Sigmoid colon (tissue), 7 donors: ENCODE measurements at regions of chr4 and their contacts with region 1.

Region 1: DNA sequence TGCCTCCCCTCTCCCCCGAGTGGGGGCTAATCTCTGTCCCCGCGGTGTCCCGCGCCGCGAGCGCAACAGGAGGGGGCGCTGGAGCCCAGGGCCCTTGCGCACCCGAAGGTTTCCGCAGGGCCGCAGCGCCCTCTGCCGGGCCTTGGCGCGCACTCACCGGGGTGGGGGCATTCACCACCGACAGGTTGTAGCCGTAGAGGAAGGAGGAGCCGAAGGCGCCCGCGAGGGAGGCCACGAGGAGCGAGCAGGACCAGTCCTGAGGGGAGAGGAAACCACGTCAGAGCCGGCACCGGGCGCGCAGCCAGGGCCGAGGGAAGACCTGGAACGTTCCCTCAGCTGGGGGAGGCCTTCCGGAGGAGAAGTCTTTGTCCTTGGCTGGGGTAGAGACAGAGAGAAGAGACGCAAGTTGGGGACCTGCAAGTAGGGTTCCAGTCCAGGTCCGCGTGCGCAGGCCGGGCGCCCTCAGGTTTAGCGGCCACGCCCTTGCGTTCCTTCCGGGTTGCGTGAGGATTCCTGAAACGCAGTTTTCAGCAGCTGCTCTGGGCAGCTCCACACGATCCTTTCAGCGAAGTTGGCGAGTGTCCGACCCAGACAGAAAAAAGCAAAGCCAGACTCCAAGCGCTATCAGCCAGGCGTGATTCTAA is 2.4 kb downstream of the SLC2A9 start:
- DNase-seq: peak; percentile 99
- H3K4me3 ChIP-seq: peak overlapping the region; percentile 33 to 50 (median 48)
- H3K27ac ChIP-seq: peak overlapping the region; percentile 84 to 91 (median 88)
- H3K4me1 ChIP-seq: peaks cover 0 to 23% (median 18%) of the 10 kb centered on the region in 4 donors
- H3K27me3 ChIP-seq: no peaks in the 10 kb centered on the region
- CTCF ChIP-seq: peak; percentile 98 to 99 (median 99)
- EP300 ChIP-seq: peak in 2 of 4 donors; percentile 52 to 83
- POLR2A ChIP-seq: peak in 1 of 2 donors; percentile 30

Region 2: GRCh38 chr4:9691238-9692065 is 327.5 kb before region 1 on chr4:
- intact Hi-C with region 1: loop called (anchors 5 kb)
- DNase-seq: peak; percentile 98
- H3K4me3 ChIP-seq: peak overlapping the region; percentile 41 to 59 (median 57)
- H3K27ac ChIP-seq: peak overlapping the region; percentile 78 to 84 (median 82)
- H3K4me1 ChIP-seq: no peaks in the 10 kb centered on the region
- H3K27me3 ChIP-seq: no peaks in the 10 kb centered on the region
- CTCF ChIP-seq: no peak
- EP300 ChIP-seq: no peak
- POLR2A ChIP-seq: no peak

Region 3: DNA sequence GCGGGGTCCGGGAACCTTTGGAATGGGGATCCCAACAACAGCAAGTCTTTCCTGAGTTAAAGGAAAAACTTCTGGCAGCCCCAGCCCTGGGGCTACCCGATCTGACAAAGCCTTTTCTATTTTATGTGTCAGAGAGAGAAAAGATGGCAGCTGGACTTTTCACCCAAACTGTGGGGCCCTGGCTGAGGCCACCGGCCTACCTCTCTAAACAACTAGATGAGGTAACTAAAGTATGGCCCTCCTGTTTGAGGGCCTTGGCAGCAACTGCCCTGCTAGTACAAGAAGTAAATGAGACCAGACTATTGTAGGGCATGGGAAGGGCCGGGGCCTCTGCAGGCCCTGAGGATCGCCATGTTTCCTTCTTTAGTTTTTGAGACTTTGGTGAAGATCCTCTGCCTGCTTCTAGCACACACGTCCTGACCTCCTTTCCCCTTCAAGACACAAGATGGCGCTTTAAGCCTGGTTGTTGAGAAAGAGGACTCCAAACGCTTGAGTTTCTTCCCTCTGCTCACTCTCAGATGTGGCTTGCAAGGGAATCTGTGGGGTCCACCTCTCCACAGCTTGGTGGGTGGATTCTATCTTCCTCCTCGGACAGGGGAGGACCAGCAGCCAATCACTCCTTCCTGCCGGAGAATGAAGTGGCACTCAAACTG is 256.0 kb before region 1 on chr4:
- intact Hi-C with region 1: loop called (anchors 1 kb)
- DNase-seq: no peak
- H3K4me3 ChIP-seq: no peak overlapping the region
- H3K27ac ChIP-seq: no peak overlapping the region
- H3K4me1 ChIP-seq: no peaks in the 10 kb centered on the region
- H3K27me3 ChIP-seq: peaks cover 0 to 18% (median 0%) of the 10 kb centered on the region in 3 donors
- CTCF ChIP-seq: peak; percentile 36 to 63 (median 48)
- EP300 ChIP-seq: no peak
- POLR2A ChIP-seq: no peak

Region 4: GRCh38 chr4:10063544-10064300 is 44.8 kb after region 1 on chr4:
- intact Hi-C with region 1: loop called (anchors 1 kb)
- DNase-seq: peak; percentile 89
- H3K4me3 ChIP-seq: no peak overlapping the region
- H3K27ac ChIP-seq: peak overlapping the region; percentile 16 to 62 (median 54)
- H3K4me1 ChIP-seq: peaks cover 0 to 14% (median 12%) of the 10 kb centered on the region in 4 donors
- H3K27me3 ChIP-seq: no peaks in the 10 kb centered on the region
- CTCF ChIP-seq: peak; percentile 29 to 62 (median 47)
- EP300 ChIP-seq: no peak
- POLR2A ChIP-seq: no peak

Region 5: DNA sequence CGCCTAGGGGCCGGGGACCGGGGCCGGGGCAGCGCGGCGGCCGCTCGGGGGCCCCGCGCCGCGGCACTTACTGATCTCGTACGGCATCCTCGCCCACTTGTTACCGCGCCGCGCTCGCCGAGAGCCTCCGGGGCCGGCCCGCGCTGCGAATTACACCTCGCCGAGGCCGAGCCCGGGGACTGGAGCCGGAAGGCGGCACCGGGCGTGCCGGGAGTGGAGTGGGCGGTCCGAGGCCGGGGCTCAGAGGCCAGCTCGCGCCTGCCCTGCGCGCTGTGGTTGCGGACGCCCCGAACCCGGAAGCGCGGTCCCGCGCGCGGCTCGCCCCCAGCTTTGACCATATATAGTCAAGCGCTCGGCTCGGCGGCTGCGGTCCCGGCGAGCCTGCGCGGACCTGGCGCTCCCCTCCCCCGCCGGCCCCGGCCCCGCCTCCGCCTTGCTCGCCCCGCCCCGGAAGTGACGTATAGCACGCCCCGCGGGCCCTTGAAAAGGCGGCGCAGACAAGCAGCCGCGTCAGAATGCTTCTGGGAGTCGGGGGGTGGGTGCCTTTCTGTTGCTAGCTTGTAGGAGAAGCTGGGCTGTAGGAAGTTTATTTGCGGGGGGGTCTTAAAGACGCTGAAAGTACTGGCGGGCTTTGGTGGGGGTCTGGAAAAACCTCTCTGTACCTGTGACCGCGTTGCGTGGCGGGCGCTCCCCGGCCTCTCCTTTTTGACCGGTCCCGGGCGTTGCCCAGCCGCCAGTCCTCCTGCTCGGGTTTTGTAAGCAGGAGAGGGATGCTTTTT is 97.8 kb after region 1 on chr4 and contains the start of gene WDR1:
- intact Hi-C with region 1: loop called (anchors 1 kb)
- DNase-seq: peak; percentile 99
- H3K4me3 ChIP-seq: peak within 1 kb of the TSS; percentile 71 to 94 (median 86)
- H3K27ac ChIP-seq: peak within 1 kb of the TSS; percentile 90 to 98 (median 96)
- H3K4me1 ChIP-seq: peaks cover 0 to 65% (median 59%) of the 10 kb centered on the region in 4 donors
- H3K27me3 ChIP-seq: no peaks in the 10 kb centered on the region
- CTCF ChIP-seq: no peak
- EP300 ChIP-seq: peak in 1 of 4 donors; percentile 8
- POLR2A ChIP-seq: peak; percentile 98 to 99
- total RNA-seq, gene WDR1: 171 to 267 (median 238) TPM

Region 6: GRCh38 chr4:10346023-10346422 is 327.1 kb after region 1 on chr4:
- intact Hi-C with region 1: no loop called
- DNase-seq: no peak
- H3K4me3 ChIP-seq: no peak overlapping the region
- H3K27ac ChIP-seq: no peak overlapping the region
- H3K4me1 ChIP-seq: no peaks in the 10 kb centered on the region
- H3K27me3 ChIP-seq: no peaks in the 10 kb centered on the region
- CTCF ChIP-seq: no peak
- EP300 ChIP-seq: no peak
- POLR2A ChIP-seq: no peak

Region 7: GRCh38 chr4:10403633-10404445 is 384.9 kb after region 1 on chr4:
- intact Hi-C with region 1: loop called (anchors 5 kb)
- DNase-seq: no peak
- H3K4me3 ChIP-seq: no peak overlapping the region
- H3K27ac ChIP-seq: no peak overlapping the region
- H3K4me1 ChIP-seq: no peaks in the 10 kb centered on the region
- H3K27me3 ChIP-seq: no peaks in the 10 kb centered on the region
- CTCF ChIP-seq: peak; percentile 34 to 68 (median 57)
- EP300 ChIP-seq: no peak
- POLR2A ChIP-seq: no peak

Region 8: DNA sequence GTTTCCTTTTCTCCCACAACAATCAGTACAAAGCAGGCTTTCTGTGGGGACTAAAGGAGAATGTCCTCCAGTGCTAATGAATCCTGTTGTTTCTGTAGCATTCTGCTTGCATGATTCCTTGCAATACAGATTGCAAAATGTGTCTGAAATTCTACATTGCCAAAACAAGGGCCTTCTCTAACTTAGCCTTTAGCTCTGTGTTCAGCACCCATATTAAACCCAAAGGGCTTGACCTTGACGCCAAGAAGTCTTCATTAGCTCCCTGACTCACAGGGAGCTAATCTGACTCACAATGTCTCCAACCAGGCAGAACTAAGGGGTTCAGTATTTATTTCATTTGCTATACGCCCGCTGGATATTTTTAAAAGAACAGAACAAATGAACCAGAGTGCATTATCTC is 907.1 kb after region 1 on chr4:
- intact Hi-C with region 1: no loop called
- DNase-seq: no peak
- H3K4me3 ChIP-seq: no peak overlapping the region
- H3K27ac ChIP-seq: no peak overlapping the region
- H3K4me1 ChIP-seq: no peaks in the 10 kb centered on the region
- H3K27me3 ChIP-seq: no peaks in the 10 kb centered on the region
- CTCF ChIP-seq: no peak
- EP300 ChIP-seq: no peak
- POLR2A ChIP-seq: no peak